Dorsolateral prefrontal cortex (tissue), 120 donors: ENCODE measurements at regions of chr12 and their contacts with region 1.

Region 1: DNA sequence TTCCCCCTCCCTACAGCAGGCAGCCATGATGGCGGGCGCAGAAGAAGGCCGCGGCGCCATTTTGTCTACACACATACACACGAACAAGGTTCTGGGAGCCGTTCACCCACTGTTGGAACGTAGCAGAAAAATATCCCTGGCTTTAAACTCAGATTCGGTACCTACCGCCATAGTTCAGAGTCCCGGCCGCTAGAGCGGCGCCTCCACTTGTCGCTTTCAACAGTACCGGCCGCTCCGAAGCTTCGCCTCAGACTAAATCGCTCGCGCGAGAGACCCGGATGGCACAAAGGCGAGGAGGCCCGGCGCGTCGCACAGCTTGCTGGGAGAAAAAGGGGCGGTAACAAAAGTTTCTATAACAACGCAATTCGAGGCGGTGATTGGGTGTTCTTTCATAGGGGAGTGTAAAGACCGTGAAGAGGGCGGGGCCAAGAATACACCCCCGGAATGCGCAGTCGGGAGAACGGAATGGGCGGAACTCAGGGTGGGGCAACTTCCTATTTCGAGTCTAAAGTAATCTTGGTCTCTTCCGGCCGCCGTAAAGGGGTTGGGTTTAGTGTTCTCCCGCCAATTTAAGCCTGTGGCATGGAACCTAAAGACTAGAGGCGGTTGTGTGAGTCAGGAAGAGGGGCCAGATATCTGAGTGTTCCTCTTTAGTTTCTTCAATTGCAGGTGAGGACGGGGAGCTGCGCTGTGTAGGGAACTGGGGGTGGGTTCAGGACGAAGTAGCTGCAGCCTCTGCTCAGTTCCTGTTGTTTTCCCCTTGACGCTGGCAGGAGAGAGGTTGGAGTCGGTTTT is at the starts of genes KNTC1 and RSRC2:
- DNase-seq: peak; percentile 90 to 99 (median 98)
- H3K4me3 ChIP-seq: peak within 1 kb of the TSS; percentile 54 to 99 (median 88)
- H3K27ac ChIP-seq: peak within 1 kb of the TSS; percentile 94 to 100 (median 99)
- H3K27me3 ChIP-seq: no peaks in the 10 kb centered on the region
- CTCF ChIP-seq: peak in 13 of 56 donors; percentile 3 to 49 (median 7)
- total RNA-seq, gene KNTC1: 7.7 to 22.4 (median 13.5) TPM
- total RNA-seq, gene RSRC2: 61.3 to 108 (median 77.8) TPM

Region 2: GRCh38 chr12:122225683-122226407 is 301.0 kb before region 1 on chr12 and contains the start of gene DIABLO:
- intact Hi-C with region 1: loop called in 1 of 2 experiments (anchors 5 kb)
- DNase-seq: peak; percentile 99 to 100 (median 100)
- H3K4me3 ChIP-seq: peak within 1 kb of the TSS; percentile 62 to 100 (median 95)
- H3K27ac ChIP-seq: peak within 1 kb of the TSS in 58 of 59 donors; percentile 32 to 97 (median 88)
- H3K27me3 ChIP-seq: no peaks in the 10 kb centered on the region
- CTCF ChIP-seq: peak in 14 of 56 donors; percentile 3 to 40 (median 20)
- total RNA-seq, gene DIABLO: 26.7 to 52.0 (median 41.8) TPM

Region 3: DNA sequence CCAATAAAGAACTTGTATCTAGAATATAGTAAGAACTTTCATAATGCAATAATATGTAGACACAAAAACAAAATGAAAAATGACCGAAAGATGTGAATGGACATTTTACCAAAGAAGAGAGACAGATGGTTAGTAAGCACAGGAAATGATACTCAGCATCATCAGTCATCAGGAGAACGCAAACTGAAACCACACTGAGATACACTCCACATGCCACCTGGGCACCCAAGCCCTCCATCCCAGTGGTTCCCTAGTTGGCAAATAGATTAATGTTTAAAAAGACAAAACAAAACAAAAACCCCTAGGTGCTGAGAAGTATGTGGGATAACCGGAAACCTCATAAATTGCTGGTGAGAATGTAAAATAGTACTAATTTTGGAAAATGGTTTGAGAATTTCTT is 233.8 kb before region 1 on chr12:
- intact Hi-C with region 1: no loop called
- DNase-seq: no peak
- H3K4me3 ChIP-seq: no peak overlapping the region
- H3K27ac ChIP-seq: peak overlapping the region in 6 of 59 donors; percentile 13 to 49 (median 26)
- H3K27me3 ChIP-seq: no peaks in the 10 kb centered on the region
- CTCF ChIP-seq: no peak

Region 4: GRCh38 chr12:122471324-122472226 is 55.3 kb before region 1 on chr12:
- intact Hi-C with region 1: loop called in 1 of 2 experiments (anchors 2 kb)
- DNase-seq: peak in 1 of 10 donors; percentile 16
- H3K4me3 ChIP-seq: peak overlapping the region in 8 of 59 donors; percentile 2 to 26 (median 9)
- H3K27ac ChIP-seq: peak overlapping the region in 41 of 59 donors; percentile 3 to 82 (median 50)
- H3K27me3 ChIP-seq: no peaks in the 10 kb centered on the region
- CTCF ChIP-seq: peak; percentile 56 to 89 (median 80)

Region 5: GRCh38 chr12:122500685-122501488 is 26.0 kb before region 1 on chr12 and contains the start of gene ZCCHC8:
- intact Hi-C with region 1: loop called (anchors 1 to 2 kb)
- DNase-seq: peak; percentile 92 to 98 (median 97)
- H3K4me3 ChIP-seq: peak within 1 kb of the TSS; percentile 53 to 97 (median 90)
- H3K27ac ChIP-seq: peak within 1 kb of the TSS; percentile 81 to 99 (median 97)
- H3K27me3 ChIP-seq: no peaks in the 10 kb centered on the region
- CTCF ChIP-seq: peak in 40 of 56 donors; percentile 6 to 60 (median 32)
- total RNA-seq, gene ZCCHC8: 13.4 to 37.0 (median 23.0) TPM

Region 6: GRCh38 chr12:122669397-122670070 is 142.7 kb after region 1 on chr12:
- intact Hi-C with region 1: no loop called
- DNase-seq: no peak
- H3K4me3 ChIP-seq: no peak overlapping the region
- H3K27ac ChIP-seq: no peak overlapping the region
- H3K27me3 ChIP-seq: no peaks in the 10 kb centered on the region
- CTCF ChIP-seq: no peak

Region 7: DNA sequence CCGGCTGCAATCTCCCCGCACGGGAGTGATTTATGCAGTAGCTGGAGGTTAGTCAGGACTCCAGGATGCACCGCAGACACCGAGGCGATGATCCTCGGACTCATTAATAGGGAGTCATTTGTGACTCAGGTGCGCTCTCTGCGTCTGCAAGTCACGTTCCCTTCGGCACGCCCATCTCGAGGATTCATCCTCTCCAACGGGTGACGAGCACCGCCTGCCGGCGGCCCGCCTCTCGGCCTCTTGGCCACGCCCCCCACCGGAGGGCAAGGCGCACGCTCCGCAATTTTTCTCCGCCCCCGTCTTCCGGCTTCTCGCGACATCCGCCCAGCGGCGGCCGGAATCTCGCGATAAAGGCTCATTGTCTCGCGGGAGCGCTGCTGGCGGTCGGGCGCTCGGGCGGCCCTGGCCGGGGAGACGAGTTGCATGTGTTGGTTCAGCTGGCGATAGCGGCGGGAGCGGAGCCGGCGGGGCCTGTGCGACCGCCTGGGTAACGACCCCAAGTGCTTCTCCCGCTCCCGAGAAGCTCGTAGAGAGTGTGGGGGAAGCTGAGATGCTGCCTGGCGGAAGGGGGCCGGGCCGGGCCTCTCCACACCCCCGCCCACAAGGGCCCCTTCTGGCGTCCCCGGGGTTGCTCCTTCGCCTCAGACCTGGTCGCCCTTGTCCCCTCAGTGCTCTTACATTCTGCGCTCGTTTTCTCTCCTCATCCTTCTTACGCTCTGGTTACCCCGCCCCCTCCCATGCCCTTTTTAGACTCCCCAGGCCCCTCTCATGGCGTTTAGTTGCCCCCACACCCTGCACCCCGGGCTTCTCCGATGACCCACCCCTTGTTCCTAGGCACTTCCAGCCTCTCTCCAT is 225.8 kb after region 1 on chr12 and contains the start of gene DENR:
- intact Hi-C with region 1: loop called (anchors 2 kb)
- DNase-seq: peak; percentile 92 to 98 (median 96)
- H3K4me3 ChIP-seq: peak within 1 kb of the TSS; percentile 66 to 99 (median 94)
- H3K27ac ChIP-seq: peak within 1 kb of the TSS in 58 of 59 donors; percentile 36 to 97 (median 83)
- H3K27me3 ChIP-seq: no peaks in the 10 kb centered on the region
- CTCF ChIP-seq: peak; percentile 85 to 99 (median 96)
- total RNA-seq, gene DENR: 23.3 to 54.9 (median 38.1) TPM